ENCODE measurements at regions of chr14 and their contacts with region 1.

Region 1: DNA sequence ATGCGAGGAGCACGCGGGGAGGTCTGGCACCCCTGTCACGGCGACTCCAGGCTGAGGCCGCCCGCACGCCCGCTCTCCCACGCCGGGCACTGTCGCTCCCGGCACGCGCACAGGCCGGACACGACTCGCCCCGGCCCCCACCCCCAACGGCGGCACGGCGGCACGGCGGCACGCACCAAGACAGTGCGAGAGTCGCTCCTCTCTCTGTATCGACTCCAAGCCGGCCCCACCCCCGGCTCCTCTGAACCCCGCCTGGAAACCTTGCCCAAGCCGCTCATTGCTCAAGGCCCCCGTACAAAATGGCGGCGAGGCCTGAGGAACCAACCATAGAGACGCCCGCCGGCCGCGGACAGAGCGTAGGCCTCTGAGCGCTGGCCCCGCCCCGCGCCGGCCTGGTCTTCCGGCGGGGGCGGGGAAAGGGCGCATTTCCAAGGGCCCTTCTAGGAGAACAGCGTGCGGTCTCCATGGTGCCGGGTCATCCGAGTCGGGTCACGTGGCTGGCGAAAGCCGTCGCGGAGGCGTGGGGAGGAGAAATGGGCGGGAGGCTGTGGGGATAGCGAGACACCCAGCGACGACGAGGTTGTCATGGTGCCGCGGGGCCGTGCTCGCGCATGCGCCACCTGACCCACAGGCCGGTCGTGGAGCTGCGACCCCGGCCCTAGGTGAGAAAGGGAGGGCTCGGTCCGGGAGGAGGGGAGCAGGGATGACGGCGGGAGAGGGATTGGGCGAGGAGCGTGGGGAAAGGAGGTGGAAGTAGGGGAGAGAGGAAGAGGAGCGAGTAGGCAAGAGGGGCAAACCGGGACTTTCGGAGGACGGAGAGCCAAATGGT is at the start of gene CIPC:
- DNase-seq: peak; percentile 97

Region 2: DNA sequence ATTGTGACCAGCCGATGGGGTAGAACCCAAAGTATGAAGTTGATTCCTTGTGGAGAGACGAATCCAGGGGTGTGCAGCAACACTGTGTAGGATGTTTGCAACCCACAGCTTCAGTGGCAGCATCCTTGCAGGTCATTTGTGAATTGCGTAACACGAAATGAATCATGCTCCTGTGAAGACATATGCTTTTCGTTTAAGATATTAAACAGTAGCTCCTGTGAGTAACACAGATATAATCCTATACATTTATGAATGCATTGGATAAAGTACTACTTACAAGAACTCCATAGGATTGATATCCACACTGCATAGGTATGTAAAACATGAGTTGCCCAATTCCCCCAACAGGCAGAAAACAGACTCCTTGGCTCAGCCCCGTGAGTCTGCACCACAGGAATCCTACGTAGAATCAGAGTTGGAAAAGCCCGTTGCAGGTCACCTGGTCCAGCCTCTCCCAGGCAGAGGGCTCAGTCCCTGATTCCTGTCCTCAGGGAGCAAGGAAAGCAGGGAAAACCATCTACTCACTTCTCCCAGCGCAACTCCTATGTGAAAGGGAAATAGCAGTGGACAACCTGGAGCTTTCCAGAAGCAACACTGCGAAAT is 870.4 kb before region 1 on chr14:
- in situ Hi-C with region 1: no loop called
- DNase-seq: no peak

Region 3: DNA sequence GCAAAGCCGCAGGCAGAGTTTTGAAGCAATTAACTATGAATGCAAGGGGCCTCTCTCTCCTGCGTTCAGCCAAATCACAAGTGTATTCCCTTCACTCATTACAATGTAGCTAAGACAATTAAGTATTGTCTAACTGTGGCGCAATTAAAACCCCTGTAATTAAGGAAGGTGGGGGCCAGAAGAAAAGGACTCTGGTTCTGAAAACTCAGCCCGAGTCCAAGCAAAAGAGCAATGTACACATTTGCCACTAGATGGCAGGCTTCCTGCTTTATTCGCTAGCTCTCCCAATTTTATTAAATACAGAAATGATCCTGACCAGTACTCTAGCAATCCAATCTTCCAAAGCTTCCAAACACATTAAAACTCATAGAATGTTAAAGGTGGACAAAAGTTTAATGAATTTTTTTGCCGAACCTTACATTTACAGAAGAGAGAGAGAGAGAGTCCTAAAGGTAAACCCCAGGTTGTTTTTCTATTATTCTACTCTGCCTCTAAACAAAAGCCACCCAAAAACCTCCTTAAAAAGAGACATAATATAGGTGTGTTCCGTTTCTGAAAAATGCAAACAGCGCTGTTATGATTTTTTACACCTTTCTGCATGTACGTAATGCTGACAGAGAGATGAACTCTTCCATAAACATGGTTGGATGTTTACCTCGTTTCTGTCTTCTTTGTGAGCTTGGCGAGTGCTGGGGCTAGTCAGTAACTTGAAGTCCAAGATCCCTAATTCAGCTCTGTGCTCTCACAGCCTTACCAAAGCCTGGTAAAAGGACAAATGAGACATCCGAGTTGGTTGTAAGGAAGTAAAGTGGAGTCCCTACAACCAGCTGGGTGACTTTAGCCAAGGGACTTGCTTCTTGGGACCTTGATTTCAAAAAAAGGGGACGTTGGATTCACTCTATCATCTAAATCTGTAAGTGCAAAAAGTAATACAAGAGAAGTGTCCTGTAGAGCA is 387.6 kb before region 1 on chr14:
- in situ Hi-C with region 1: loop called (anchors 25 kb)
- DNase-seq: peak; percentile 44

Region 4: DNA sequence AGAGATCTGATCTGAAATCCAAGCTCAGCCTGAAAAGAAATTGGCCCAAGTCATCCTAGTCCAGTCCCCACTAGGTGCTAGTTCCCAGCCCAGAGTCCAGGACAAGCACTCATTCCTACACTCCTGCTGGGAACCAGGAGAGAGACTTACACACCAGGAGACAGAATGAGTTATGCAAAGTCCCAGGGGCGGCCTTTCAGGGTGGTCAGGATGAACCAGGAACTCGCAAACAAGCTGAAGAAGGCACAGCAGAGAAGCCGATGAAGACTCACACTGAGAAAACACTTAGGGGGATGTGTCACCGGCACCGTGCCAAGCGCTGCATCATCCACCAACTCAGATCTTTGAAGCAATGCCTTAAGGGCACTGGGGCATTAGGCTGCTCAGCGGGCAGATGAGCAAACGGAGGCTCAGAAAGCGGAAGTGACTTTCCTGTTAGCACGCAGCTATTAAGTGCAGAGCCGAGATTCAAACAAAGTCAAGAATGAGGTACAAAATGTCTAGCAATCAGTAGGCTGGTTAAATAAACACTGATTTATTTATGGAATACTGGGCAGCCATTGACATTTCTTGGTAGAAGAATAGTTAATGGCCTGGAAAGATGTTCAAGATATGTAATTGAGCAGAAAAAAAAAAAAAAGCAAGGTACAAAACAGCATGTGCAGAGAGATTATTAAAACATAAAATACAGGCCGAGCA is 193.0 kb before region 1 on chr14:
- in situ Hi-C with region 1: loop called (anchors 25 kb)
- DNase-seq: peak; percentile 95

Region 5: DNA sequence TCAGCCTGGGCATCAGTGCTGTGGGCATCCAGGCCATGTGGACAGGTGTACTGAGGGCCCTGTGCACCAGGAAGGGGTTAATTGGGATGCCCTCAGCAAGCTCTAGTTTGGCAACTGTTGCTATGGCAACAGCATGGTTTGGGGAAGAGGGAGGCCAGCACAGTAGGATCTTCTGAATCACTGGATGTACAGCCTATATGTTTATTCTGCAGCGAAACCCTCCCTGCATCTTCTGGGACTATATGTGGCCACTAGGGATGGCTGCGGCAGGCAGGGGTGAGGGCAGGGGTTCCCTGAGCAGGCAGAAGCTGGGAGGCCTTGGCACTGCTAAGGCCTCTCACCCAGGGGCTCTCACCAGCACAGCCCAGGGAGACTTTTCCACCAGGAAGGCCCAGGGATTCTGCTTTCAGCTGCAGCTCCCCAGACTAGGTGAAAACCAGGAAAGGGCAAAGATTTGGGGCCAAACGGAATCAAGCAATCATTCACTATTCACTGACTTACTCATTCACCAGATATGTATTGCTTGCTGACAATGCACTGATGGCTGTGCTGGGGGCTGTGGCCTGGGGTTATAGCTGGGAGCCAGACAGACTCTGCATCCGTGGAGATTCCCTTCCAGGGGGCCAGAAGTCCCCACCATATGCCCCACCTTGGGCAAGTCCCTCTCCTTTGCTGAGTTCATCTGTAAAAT is 112.2 kb before region 1 on chr14:
- in situ Hi-C with region 1: no loop called
- DNase-seq: peak; percentile 67

Region 6: DNA sequence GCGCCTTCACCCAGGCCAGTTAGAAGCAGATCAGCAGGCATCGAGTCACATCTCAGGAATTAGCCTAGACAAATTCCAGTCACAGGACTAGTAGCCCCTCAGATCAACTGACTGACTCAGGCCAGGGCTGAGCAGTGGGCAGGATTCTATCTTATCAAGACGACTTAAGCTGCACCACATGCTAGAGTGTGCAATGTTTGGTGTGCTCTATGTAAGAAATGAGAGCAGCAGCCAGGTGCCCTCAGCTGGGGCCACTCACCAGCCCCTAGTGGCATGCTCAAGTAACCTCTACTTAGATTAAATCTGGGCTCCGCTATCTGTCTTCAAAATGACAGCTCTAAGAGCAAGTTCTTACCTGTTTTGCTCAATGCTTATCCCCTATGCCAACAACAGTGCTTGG is 192.8 kb after region 1 on chr14:
- in situ Hi-C with region 1: no loop called
- DNase-seq: peak; percentile 5